Esophagus muscularis mucosa (tissue), 4 donors: ENCODE measurements at regions of chrX and their contacts with region 1.

Region 1: DNA sequence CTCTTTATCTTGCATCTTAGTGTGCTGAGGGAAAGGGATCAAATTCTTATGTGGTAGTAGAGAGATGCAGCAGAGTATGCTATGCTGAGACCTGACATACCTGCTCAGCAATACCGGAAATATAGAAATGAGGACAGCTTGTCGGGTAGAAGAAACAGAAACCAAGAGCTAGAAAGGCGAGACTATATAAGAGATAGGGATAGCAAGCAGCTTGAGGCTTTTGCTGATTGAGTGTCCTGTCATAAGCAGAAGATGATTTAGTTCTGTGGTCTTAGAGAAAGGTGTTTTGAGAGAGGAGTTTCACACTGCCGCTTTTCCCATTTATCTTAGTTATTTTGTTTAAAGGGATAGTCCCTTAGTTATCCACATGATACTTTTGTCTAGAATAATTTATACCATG is 31.7 kb downstream of the USP9X start:
- DNase-seq: no peak
- H3K4me3 ChIP-seq: no peak overlapping the region
- H3K27ac ChIP-seq: no peak overlapping the region
- H3K4me1 ChIP-seq: peaks cover 22 to 80% (median 67%) of the 10 kb centered on the region in 4 donors
- H3K27me3 ChIP-seq: no peaks in the 10 kb centered on the region
- CTCF ChIP-seq: no peak
- EP300 ChIP-seq: no peak
- POLR2A ChIP-seq: no peak

Region 2: DNA sequence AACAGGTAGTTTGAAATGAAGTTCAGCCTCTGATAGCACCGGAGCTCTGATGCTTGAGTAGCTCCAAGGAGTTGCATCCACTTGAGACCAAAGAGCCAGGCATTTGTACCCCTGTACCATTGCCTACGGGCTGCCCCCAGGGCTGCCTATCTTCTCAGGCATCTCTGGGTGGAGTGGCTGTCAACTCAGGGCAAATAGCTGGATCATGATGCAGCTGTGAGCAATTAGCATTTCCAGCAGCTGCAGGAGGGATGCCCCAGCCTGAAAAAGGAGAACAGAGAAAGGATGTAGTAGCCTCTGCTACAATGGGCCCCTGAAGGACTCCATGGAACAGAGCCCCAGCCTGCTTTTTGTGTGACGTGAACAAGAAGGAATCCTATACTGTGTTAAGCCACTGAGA is 1511.8 kb before region 1 on chrX:
- intact Hi-C with region 1: no loop called
- DNase-seq: no peak
- H3K4me3 ChIP-seq: no peak overlapping the region
- H3K27ac ChIP-seq: no peak overlapping the region
- H3K4me1 ChIP-seq: peaks cover 0 to 18% (median 14%) of the 10 kb centered on the region in 4 donors
- H3K27me3 ChIP-seq: peaks cover 0 to 5% (median 0%) of the 10 kb centered on the region in 4 donors
- CTCF ChIP-seq: no peak
- EP300 ChIP-seq: no peak
- POLR2A ChIP-seq: no peak

Region 3: DNA sequence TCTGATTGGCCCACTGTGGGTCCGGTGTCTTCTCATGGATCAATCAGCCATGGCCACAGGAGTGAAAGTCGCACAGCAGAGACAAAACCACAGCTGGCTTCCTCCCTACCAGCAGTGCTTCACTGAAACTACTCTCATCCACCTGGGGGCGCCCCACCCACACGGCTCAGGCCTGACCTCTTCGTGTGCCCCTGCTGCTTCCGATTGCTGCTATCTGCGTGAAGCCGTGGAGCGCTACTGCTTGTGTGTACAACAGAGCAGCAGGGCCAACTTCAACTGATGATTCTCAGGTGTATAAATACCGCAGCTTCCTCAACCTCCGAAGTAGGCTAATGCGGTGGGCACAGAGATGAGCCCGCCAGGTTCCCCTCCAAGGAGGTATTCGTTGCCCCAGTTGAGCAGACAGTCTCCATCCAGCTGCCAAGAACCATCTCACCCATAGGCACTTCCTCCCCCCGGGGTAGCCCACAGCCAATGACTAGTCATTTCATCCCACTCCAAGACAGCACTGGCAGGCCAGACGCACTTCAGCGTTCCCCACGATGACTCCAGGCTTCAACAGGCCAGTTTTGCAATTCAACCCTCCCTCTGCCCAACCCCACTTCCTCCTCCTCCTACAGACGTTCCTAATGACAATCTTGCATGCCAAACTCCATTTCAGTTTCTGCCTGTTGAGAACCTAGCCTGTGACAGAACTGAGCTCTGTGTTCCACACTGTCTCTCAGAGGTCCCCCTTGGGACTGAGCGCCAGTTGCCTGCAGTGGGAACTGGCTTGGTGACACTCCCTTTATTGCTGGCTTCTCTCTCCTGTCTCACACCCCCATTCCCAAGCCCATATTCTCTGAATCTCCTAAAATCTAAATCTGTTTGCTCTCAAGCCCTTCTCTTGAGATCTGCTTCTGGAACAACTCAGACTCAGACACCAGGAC is 577.5 kb before region 1 on chrX:
- intact Hi-C with region 1: loop called (anchors 10 kb)
- DNase-seq: no peak
- H3K4me3 ChIP-seq: no peak overlapping the region
- H3K27ac ChIP-seq: peak overlapping the region in 1 of 4 donors; percentile 7
- H3K4me1 ChIP-seq: peaks cover 0 to 10% (median 8%) of the 10 kb centered on the region in 4 donors
- H3K27me3 ChIP-seq: peaks cover 0 to 5% (median 0%) of the 10 kb centered on the region in 4 donors
- CTCF ChIP-seq: no peak
- EP300 ChIP-seq: no peak
- POLR2A ChIP-seq: no peak

Region 4: DNA sequence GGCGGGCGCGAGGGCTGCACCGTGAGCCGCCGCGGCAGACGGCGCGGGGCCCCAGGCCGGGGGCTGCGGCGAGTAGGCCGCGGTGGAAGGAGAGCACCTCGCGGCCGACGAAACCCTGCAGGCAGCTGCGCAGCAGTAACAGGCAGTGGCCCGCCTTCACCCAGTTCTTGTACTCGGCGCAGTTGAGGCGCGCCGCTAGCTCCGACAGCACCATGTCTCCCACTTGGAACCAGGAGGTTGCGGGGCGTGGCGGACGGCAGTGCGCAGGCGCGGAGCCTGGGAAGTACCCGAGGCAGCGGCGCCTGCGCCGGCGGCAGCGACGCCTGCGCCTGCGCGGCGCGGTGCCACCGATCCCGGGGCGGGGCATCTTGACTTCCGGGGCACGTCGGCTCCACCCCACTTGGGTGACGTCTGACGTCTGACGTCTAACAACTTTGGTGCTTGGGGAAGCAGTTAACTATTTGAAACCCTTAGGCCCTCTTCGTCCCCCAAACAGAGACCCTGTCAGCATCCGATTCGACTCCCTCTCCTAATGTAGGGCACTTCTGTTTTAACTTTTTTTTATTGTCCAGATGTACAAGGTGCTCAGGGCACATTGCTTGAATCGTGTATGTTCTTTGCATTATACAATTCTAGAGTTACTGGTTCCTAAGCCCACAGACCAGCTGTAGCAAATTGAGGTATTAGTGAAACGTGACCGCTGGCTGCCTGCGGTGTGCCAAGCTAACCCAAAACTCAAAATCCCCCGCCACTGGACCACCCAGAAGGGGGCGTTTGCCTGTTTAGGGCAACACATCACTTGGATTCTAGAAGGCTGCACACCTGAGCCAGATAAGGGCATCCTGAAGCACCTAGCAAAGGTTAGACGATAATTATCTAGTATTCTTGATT is 469.4 kb before region 1 on chrX and contains the start of gene CXorf38:
- intact Hi-C with region 1: loop called (anchors 10 kb)
- DNase-seq: peak; percentile 93
- H3K4me3 ChIP-seq: peak within 1 kb of the TSS; percentile 81 to 93 (median 86)
- H3K27ac ChIP-seq: peak within 1 kb of the TSS; percentile 81 to 84 (median 82)
- H3K4me1 ChIP-seq: peaks cover 28 to 47% (median 36%) of the 10 kb centered on the region in 4 donors
- H3K27me3 ChIP-seq: no peaks in the 10 kb centered on the region
- CTCF ChIP-seq: peak in 1 of 3 experiments; percentile 20
- EP300 ChIP-seq: no peak
- POLR2A ChIP-seq: peak; percentile 37
- total RNA-seq, gene CXorf38: 5.4 to 10.8 (median 9.2) TPM

Region 5: DNA sequence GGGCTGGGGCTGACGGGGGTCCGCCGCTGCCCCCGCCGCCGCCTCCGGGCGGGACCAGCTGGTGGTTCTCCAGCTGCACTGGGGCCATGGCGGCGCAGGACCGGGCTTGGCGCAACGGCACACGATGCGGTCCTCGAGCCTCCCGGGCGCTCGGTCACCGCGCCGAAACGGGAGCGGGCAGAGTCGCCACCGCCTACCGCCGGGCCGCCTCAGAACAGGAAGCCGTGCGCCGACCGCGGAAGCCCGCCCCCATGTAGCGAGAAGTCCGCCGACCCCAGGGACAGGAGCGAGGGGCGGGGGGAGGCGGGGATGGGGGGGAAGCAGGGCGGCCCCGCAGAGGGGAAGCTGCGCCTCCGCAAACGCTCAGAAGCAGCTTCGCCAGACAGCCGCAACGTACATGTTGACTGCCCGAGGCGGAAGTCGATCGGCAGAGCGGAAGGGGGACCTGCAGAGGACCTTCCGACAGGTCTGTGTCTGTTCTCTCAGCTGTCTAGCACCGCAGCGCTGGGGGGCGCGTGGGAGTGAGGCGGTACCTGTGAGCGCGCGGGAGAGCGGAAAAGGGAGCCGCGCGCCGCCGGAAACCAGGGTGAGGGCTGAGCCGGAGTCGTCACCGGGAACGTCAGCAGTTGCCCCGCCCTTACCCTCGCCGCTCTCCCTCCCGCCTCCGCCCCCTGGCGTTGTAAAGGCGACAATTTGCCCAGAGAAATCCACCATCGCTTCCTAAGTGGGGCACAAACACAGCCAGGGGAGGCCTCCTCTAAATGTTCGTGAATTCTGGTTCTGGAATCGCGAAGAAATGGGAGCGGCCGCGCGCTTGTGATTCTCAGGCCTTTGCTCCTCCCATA is 381.4 kb before region 1 on chrX and contains the start of gene MED14:
- intact Hi-C with region 1: loop called (anchors 10 kb)
- DNase-seq: peak; percentile 92
- H3K4me3 ChIP-seq: peak within 1 kb of the TSS; percentile 71 to 78 (median 73)
- H3K27ac ChIP-seq: peak within 1 kb of the TSS; percentile 85 to 96 (median 93)
- H3K4me1 ChIP-seq: peaks cover 0 to 43% (median 29%) of the 10 kb centered on the region in 4 donors
- H3K27me3 ChIP-seq: peaks cover 0 to 4% (median 0%) of the 10 kb centered on the region in 4 donors
- CTCF ChIP-seq: peak; percentile 41 to 50 (median 44)
- EP300 ChIP-seq: no peak
- POLR2A ChIP-seq: peak; percentile 9
- total RNA-seq, gene MED14: 20.0 to 29.9 (median 24.3) TPM

Region 6: DNA sequence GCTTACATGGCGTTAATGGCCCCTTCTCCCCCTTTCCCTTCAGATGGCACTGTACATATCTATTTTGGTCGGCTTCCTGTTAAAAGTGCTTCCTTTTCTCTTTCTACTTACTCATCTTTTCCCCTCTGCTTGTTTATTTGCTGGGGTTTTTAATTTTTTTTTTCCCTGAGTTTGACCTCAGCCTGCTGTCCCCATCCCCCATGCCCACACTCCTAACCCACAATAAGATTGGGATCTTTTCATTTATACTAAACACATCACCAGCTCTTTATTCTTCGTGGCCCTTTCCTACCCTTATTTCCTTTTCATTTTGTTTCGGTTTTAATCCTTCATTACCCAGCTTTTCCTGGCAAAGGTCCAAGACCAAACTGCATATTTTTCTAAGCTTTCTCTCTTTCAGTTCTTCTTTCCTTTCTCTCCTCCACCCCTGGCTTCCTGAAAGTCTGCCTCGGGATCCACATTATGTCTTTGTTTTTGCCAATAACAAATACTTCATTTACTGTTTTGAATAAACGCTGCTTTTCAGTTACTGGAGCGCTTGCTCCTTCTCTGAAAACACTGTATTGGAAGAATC is 183.7 kb before region 1 on chrX:
- intact Hi-C with region 1: loop called (anchors 10 kb)
- DNase-seq: no peak
- H3K4me3 ChIP-seq: peak overlapping the region; percentile 22 to 36 (median 28)
- H3K27ac ChIP-seq: peak overlapping the region; percentile 64 to 74 (median 70)
- H3K4me1 ChIP-seq: peaks cover 7 to 30% (median 25%) of the 10 kb centered on the region in 4 donors
- H3K27me3 ChIP-seq: no peaks in the 10 kb centered on the region
- CTCF ChIP-seq: no peak
- EP300 ChIP-seq: no peak
- POLR2A ChIP-seq: no peak

Region 7: DNA sequence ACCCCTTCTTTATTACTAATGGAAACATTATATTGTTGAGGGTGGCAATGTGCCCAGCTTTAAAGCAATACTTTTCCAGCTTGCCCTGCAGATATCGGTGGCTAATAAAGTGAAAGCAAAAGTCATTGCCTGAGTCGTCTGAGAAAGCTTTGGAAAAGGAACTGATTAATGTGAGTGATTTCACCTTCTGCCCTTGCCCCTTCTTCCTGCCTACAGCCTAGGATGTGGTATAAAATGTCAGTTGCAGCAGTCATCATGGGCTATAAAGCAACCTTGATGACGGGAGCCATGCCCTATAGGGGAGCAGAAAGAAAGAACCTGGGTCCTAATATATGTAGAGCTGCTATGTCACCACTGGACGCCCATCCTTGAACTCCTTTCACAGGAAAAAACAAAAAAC is 164.1 kb before region 1 on chrX:
- intact Hi-C with region 1: no loop called
- DNase-seq: no peak
- H3K4me3 ChIP-seq: peak overlapping the region; percentile 4 to 47 (median 15)
- H3K27ac ChIP-seq: no peak overlapping the region
- H3K4me1 ChIP-seq: no peaks in the 10 kb centered on the region
- H3K27me3 ChIP-seq: no peaks in the 10 kb centered on the region
- CTCF ChIP-seq: no peak
- EP300 ChIP-seq: no peak
- POLR2A ChIP-seq: no peak

Region 8: DNA sequence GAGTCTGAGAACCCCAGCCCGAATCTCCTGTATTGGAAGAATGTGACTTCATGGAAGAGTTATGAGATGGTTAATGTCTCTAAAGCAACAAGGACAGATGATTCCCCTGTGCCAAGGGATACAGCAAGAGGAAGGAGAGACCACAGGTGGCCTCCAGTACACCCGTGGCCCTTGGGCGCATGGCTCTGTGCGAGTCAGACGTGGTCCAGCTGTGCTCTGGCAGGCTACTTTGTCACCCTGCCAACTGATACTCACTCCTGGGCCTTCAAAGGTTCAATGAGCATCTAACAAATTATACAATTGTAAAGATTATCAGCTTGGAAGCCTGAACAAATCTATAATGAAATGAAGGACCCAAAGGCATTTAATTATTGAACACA is 401.9 kb after region 1 on chrX:
- intact Hi-C with region 1: no loop called
- DNase-seq: no peak
- H3K4me3 ChIP-seq: no peak overlapping the region
- H3K27ac ChIP-seq: no peak overlapping the region
- H3K4me1 ChIP-seq: no peaks in the 10 kb centered on the region
- H3K27me3 ChIP-seq: no peaks in the 10 kb centered on the region
- CTCF ChIP-seq: no peak
- EP300 ChIP-seq: no peak
- POLR2A ChIP-seq: no peak